Posterior vena cava (tissue), 2 donors: ENCODE measurements at regions of chr9 and their contacts with region 1.

Region 1: GRCh38 chr9:133406480-133407307 is 11.1 kb downstream of the REXO4 start:
- DNase-seq: peak; percentile 92

Region 2: GRCh38 chr9:133184962-133185361 is 221.7 kb before region 1 on chr9:
- intact Hi-C with region 1: no loop called
- DNase-seq: no peak

Region 3: GRCh38 chr9:133377721-133378216 is 28.9 kb before region 1 on chr9:
- intact Hi-C with region 1: no loop called
- DNase-seq: no peak

Region 4: GRCh38 chr9:133470427-133470924 is 63.8 kb after region 1 on chr9:
- intact Hi-C with region 1: no loop called
- DNase-seq: no peak

Region 5: DNA sequence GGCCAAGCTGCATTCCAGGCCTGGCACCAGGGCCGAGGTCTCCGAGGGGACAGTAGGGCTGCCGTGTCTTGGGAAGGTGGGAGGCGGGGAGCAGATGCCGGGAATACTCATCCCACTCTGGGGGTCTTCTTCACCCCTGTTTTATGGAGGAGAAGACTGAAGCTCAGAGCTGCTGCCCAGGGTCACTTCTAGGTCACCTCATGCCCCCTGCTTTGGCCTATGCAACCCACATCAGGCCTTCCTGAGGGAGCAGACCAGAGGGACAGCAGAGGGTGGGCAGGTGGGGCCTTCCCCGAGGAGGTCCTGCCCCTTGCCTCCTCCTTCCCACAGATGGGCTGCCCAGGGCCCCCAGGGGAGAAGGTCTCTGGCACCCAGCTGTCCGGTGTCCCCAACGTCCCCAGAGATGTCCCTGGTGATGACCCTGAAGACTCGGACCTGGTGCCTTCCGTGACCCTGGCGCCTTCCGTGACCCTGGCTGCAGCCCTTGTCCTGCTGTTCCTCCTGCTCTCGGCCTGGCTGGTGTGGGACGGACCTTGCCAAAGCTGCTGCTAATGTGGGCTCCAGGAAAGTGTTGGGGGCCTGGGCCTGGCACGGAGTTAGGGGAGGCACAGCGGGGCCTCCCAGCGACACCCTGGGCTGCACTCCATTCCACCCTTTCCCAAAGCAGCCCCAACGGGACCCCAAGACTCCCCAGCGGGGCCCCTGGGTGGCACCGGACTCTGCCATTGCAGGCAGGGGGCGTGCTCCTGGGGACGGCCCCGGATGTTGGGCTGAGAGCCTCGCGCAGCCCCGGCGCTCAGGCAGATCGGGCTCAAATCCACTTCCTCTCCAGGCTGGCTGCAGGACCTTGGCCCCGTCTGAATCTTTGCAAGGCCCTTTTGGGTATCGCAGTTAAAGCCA is 78.9 kb after region 1 on chr9:
- intact Hi-C with region 1: loop called (anchors 2 to 5 kb)
- DNase-seq: peak; percentile 79

Region 6: DNA sequence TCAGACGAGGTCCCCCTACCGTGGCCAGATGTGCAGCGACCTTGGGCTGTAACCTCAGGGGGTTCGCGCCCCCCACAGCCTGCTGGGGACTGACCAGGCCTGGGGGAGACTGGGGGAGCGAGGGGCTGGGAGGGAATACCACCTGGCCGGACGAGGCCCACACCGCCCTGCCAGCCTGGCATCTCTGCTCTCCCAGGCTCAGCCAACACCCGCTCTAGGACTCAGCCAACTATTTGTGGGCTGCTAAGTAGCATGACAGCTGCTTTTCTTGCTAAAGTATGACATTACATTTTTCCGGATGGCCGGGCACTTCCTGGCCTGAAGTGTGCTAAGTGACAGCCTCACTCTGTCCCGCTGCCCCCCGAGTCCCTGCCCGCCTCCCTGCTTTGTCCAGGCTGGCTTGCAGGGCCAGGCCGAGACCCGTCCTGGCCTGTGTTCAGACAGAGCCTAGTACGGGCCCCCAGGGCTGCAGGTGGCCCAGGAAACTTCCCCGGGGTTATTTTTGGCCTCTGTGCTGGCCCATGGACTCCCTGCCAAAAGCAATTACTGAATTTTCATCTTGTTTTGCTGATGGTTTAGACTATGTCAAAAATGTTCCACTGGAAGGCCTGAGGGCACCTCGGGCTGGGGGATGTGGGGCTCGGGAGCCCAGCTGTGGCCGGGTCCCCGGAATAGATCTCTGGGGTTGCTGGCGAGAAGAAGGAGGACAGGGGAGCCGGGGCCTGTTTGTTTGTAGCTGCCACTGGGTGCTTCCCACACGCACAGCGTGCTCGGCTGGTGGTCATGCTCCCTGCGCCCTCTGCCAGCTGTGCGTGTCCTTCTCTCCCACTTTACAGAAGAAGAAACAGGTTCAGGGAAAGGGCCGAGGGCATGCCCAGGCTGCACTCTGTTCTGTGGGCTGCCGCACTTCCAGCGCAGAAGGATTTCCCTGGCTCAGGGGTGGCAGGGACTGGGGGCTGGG is 85.6 kb after region 1 on chr9:
- intact Hi-C with region 1: loop called (anchors 2 to 5 kb)
- DNase-seq: peak; percentile 79